ENCODE measurements at regions of chr10 and their contacts with region 1.

Region 1: GRCh38 chr10:110871298-110872084 is at the start of gene PDCD4:
- DNase-seq: peak; percentile 89 to 96 (median 92)
- H3K4me3 ChIP-seq: peak within 1 kb of the TSS; percentile 67 to 95
- H3K4me3 Mint-ChIP-seq: peak within 1 kb of the TSS; percentile 96 to 99 (median 96)
- H3K27ac ChIP-seq: peak within 1 kb of the TSS; percentile 98
- H3K27ac Mint-ChIP-seq: peak within 1 kb of the TSS; percentile 91 to 100 (median 99)
- H3K4me1 ChIP-seq: peaks cover 78% of the 10 kb centered on the region
- H3K4me1 Mint-ChIP-seq: peaks cover 44 to 86% (median 62%) of the 10 kb centered on the region in 4 donors
- H3K27me3 ChIP-seq: no peaks in the 10 kb centered on the region
- H3K27me3 Mint-ChIP-seq: no peaks in the 10 kb centered on the region
- total RNA-seq, gene PDCD4: 358 to 376 TPM

Region 2: DNA sequence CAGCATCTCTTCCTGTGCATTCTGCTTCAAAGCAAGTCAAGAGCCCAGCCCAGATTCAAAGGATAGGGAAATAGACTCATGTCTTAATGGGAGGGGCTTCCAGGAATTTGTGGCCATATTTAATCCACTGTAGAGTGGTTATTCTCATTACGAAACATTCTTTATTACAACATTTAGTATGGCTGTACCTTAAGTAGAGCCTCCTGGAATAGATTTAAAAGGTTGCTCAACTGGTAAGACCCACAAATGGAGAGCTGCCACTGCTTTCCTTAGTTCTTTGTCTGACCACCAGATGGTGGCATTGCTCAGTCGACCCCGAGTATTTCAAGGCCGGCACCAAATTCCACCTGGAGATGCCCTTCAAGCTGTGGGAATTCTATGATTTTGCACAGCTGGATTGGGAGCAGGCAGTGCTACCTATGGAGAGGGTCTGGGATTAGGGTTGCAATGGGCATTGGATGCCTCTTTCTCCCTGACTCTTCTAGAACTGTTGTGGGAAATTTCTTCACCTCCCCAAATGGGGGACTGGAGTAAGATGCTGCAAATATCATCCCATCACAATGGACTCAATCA is 125.2 kb before region 1 on chr10:
- CTCF ChIA-PET with region 1: interaction called, 10 read pairs
- POLR2A ChIA-PET with region 1: interaction called, 8 read pairs
- intact Hi-C with region 1: loop called (anchors 1 kb)
- DNase-seq: peak in 4 of 5 donors; percentile 44 to 58 (median 50)
- H3K4me3 ChIP-seq: no peak overlapping the region
- H3K4me3 Mint-ChIP-seq: peak overlapping the region in 1 of 8 donors; percentile 23
- H3K27ac ChIP-seq: no peak overlapping the region
- H3K27ac Mint-ChIP-seq: peak overlapping the region in 6 of 7 donors; percentile 20 to 71 (median 42)
- H3K4me1 ChIP-seq: peaks cover 47% of the 10 kb centered on the region
- H3K4me1 Mint-ChIP-seq: peaks cover 42 to 72% (median 56%) of the 10 kb centered on the region in 4 donors
- H3K27me3 ChIP-seq: no peaks in the 10 kb centered on the region
- H3K27me3 Mint-ChIP-seq: no peaks in the 10 kb centered on the region

Region 3: GRCh38 chr10:110834629-110835301 is 36.7 kb before region 1 on chr10:
- CTCF ChIA-PET with region 1: interaction called, 7 read pairs
- POLR2A ChIA-PET with region 1: interaction called, 14 read pairs
- intact Hi-C with region 1: loop called (anchors 2 kb)
- DNase-seq: peak in 2 of 5 donors; percentile 19 to 24
- H3K4me3 ChIP-seq: no peak overlapping the region
- H3K4me3 Mint-ChIP-seq: peak overlapping the region in 3 of 8 donors; percentile 0 to 26 (median 17)
- H3K27ac ChIP-seq: no peak overlapping the region
- H3K27ac Mint-ChIP-seq: peak overlapping the region in 6 of 7 donors; percentile 44 to 82 (median 62)
- H3K4me1 ChIP-seq: peaks cover 26% of the 10 kb centered on the region
- H3K4me1 Mint-ChIP-seq: peaks cover 5 to 29% (median 15%) of the 10 kb centered on the region in 4 donors
- H3K27me3 ChIP-seq: no peaks in the 10 kb centered on the region
- H3K27me3 Mint-ChIP-seq: no peaks in the 10 kb centered on the region

Region 4: GRCh38 chr10:110852255-110852896 is 19.1 kb before region 1 on chr10:
- CTCF ChIA-PET with region 1: interaction called, 31 read pairs
- POLR2A ChIA-PET with region 1: interaction called, 214 read pairs
- intact Hi-C with region 1: no loop called
- DNase-seq: no peak
- H3K4me3 ChIP-seq: no peak overlapping the region
- H3K4me3 Mint-ChIP-seq: peak overlapping the region in 7 of 8 donors; percentile 23 to 86 (median 78)
- H3K27ac ChIP-seq: no peak overlapping the region
- H3K27ac Mint-ChIP-seq: peak overlapping the region; percentile 79 to 89 (median 86)
- H3K4me1 ChIP-seq: peaks cover 74% of the 10 kb centered on the region
- H3K4me1 Mint-ChIP-seq: peaks cover 61 to 82% (median 72%) of the 10 kb centered on the region in 4 donors
- H3K27me3 ChIP-seq: no peaks in the 10 kb centered on the region
- H3K27me3 Mint-ChIP-seq: no peaks in the 10 kb centered on the region

Region 5: DNA sequence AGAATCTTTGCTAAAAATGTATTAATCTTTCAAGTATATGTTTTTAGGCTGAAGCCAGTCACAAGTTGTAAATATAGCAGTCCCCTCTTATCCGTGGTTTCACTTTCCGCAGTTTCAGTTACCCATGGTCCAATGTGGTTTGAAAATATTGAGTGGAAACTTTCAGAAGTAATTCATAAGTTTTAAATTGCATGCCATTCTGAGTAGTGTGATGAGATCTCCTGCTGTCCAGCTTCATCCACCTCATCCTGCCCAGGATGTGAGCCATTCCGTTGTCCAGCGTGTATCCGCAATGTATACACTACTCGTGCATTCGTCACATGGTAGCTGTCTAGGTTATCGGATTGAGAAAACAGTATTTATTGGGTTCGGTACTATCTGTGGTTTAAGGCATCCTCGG is 12.4 kb after region 1 on chr10:
- CTCF ChIA-PET with region 1: interaction called, 3 read pairs
- POLR2A ChIA-PET with region 1: interaction called, 16 read pairs
- intact Hi-C with region 1: loop called (anchors 1 kb)
- DNase-seq: no peak
- H3K4me3 ChIP-seq: no peak overlapping the region
- H3K4me3 Mint-ChIP-seq: peak overlapping the region; percentile 54 to 83 (median 80)
- H3K27ac ChIP-seq: no peak overlapping the region
- H3K27ac Mint-ChIP-seq: peak overlapping the region; percentile 65 to 94 (median 80)
- H3K4me1 ChIP-seq: peaks cover 81% of the 10 kb centered on the region
- H3K4me1 Mint-ChIP-seq: peaks cover 52 to 83% (median 68%) of the 10 kb centered on the region in 4 donors
- H3K27me3 ChIP-seq: no peaks in the 10 kb centered on the region
- H3K27me3 Mint-ChIP-seq: no peaks in the 10 kb centered on the region

Region 6: DNA sequence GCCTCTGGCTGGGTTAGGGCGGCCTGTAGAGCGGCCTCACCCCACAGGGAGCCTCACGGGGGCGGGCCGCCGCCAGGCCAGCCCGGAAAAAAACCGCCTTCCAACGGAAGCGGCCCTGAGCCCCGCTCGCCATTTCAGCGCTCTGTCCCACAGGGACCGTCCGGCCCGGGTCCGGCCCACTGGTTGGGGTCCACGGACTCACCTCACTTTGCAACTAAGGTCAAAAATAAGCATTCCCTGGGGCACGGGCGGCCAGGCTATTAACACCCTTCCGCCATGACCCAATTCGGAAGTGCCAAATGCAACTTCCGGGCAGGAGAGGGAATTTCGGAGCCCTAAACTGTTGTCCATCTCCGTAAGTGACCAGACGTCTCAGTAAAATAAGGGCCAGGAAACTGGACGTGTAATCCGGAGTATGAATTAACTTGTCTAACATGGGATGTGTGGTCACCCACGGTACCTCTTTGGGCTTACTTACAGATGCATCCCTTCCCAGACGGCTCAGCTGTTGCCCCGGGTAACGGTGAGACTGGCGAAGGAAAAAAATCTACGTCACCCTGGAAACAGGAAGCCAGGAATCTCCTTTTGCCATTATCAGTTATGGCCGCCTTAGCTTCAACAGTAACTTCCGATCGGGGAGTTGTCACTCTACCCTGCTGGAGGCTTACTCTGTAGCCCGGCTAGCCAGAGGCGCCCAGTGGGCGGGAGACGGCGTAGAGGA is 47.3 kb after region 1 on chr10 and contains the start of gene BBIP1:
- CTCF ChIA-PET with region 1: no interaction called
- POLR2A ChIA-PET with region 1: interaction called, 15 read pairs
- intact Hi-C with region 1: loop called (anchors 1 kb)
- DNase-seq: peak in 1 of 5 donors; percentile 96
- H3K4me3 ChIP-seq: peak within 1 kb of the TSS; percentile 85 to 99
- H3K4me3 Mint-ChIP-seq: peak within 1 kb of the TSS; percentile 92 to 99 (median 98)
- H3K27ac ChIP-seq: peak within 1 kb of the TSS; percentile 99
- H3K27ac Mint-ChIP-seq: peak within 1 kb of the TSS; percentile 98 to 100 (median 100)
- H3K4me1 ChIP-seq: peaks cover 43% of the 10 kb centered on the region
- H3K4me1 Mint-ChIP-seq: peaks cover 27 to 64% (median 35%) of the 10 kb centered on the region in 4 donors
- H3K27me3 ChIP-seq: no peaks in the 10 kb centered on the region
- H3K27me3 Mint-ChIP-seq: no peaks in the 10 kb centered on the region
- total RNA-seq, gene BBIP1: 42.9 to 46.8 TPM